Dorsolateral prefrontal cortex (tissue), 120 donors: ENCODE measurements at regions of chr1 and their contacts with region 1.

Region 1: DNA sequence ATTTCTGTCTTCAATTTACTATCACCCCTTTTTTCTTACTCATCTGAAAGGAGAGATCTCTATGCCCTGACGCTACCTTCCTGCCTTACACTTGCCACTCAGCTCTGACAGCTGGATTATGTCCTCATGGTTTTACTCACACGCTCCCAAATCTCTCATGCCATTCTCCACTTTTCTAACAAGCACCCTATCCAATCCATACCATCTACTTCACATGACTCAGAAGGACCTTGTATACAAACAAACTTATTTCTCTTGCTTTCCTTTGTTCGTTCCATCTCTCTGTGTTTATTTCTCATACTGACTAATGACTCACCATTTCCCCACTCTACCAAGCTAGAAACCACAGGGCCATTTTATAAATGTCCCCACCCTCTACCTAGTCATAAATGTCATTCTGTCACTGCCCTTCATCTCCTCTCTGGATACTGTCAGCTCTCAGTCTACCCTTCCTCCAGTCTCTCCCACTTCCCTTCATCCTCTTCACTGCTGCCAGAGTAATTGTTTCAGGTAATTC is 87.3 kb downstream of the USP24 start:
- DNase-seq: no peak
- H3K4me3 ChIP-seq: no peak overlapping the region
- H3K27ac ChIP-seq: no peak overlapping the region
- H3K27me3 ChIP-seq: no peaks in the 10 kb centered on the region
- CTCF ChIP-seq: no peak

Region 2: GRCh38 chr1:55107101-55107500 is 20.8 kb before region 1 on chr1:
- intact Hi-C with region 1: loop called in 1 of 2 experiments (anchors 2 kb)
- DNase-seq: no peak
- H3K4me3 ChIP-seq: no peak overlapping the region
- H3K27ac ChIP-seq: no peak overlapping the region
- H3K27me3 ChIP-seq: no peaks in the 10 kb centered on the region
- CTCF ChIP-seq: no peak